A673 (cell line): ENCODE measurements at regions of chr1 and their contacts with region 1.

Region 1: GRCh38 chr1:222171005-222171404 is 376.9 kb downstream of the HHIPL2 start:
- DNase-seq: peak; percentile 43
- H3K4me3 ChIP-seq: no peak overlapping the region
- H3K27ac ChIP-seq: no peak overlapping the region
- H3K4me1 ChIP-seq: no peaks in the 10 kb centered on the region
- H3K27me3 ChIP-seq: no peaks in the 10 kb centered on the region
- CTCF ChIP-seq: peak; percentile 58

Region 2: GRCh38 chr1:220873868-220874655 is 1296.9 kb before region 1 on chr1:
- CTCF ChIA-PET with region 1: no interaction called
- POLR2A ChIA-PET with region 1: no interaction called
- intact Hi-C with region 1: loop called (anchors 5 kb)
- DNase-seq: peak; percentile 52
- H3K4me3 ChIP-seq: no peak overlapping the region
- H3K27ac ChIP-seq: no peak overlapping the region
- H3K4me1 ChIP-seq: no peaks in the 10 kb centered on the region
- H3K27me3 ChIP-seq: peaks cover 41% of the 10 kb centered on the region
- CTCF ChIP-seq: peak; percentile 72

Region 3: GRCh38 chr1:221478050-221478949 is 692.7 kb before region 1 on chr1:
- CTCF ChIA-PET with region 1: no interaction called
- POLR2A ChIA-PET with region 1: no interaction called
- intact Hi-C with region 1: loop called (anchors 5 kb)
- DNase-seq: peak; percentile 34
- H3K4me3 ChIP-seq: no peak overlapping the region
- H3K27ac ChIP-seq: no peak overlapping the region
- H3K4me1 ChIP-seq: no peaks in the 10 kb centered on the region
- H3K27me3 ChIP-seq: peaks cover 46% of the 10 kb centered on the region
- CTCF ChIP-seq: peak; percentile 40; the same call in 1 of the 2 replicates

Region 4: DNA sequence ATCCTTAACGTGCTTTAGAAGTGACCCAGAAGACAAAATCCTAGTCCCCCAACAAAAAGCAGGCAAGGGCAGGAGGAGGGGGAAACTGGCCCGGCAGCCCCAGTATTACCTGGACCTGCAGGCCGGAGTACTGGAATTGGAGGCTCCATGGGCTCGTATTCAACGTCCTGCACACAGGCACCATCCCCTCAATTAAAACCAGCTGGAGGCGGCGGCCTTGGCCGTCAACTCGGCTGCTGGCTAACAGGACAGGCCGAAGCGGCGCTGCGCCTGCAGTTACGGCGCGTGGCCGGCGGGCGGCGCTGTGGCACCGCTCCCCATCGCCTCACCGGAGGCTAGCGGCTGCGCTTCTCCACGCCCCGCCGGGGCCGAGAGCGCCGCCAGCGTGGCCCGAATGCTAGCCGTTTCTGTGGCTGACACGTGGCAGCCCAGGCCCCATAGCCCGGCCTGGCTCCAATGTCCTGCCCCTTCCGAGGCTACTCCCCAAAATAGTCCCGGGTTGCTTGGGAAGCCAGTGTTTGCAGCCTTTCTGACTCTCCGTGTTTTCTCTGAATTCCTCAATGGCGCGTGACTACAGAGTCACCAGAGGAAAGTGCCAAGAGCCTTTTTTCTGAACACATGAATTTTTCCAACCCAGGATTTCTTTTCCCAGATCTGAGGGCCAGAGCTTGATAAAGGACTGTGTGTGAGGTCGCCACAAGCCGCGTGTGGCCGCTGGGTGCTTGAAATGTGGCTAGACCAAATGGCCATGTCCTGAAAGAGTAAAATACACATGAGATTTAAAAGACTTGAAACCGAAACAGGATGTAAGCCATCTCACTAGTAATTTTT is 294.4 kb after region 1 on chr1:
- CTCF ChIA-PET with region 1: no interaction called
- POLR2A ChIA-PET with region 1: no interaction called
- intact Hi-C with region 1: no loop called
- DNase-seq: peak; percentile 91
- H3K4me3 ChIP-seq: peak overlapping the region; percentile 55
- H3K27ac ChIP-seq: peak overlapping the region; percentile 64
- H3K4me1 ChIP-seq: no peaks in the 10 kb centered on the region
- H3K27me3 ChIP-seq: no peaks in the 10 kb centered on the region
- CTCF ChIP-seq: peak; percentile 91